H1 (cell line): ENCODE measurements at regions of chr3 and their contacts with region 1.

Region 1: GRCh38 chr3:123739754-123740153 is 144.4 kb downstream of the MYLK start:
- DNase-seq: no peak
- H3K4me3 ChIP-seq: no peak overlapping the region
- H3K27ac ChIP-seq: no peak overlapping the region
- H3K4me1 ChIP-seq: no peaks in the 10 kb centered on the region
- H3K27me3 ChIP-seq: no peaks in the 10 kb centered on the region
- CTCF ChIP-seq: no peak
- EP300 ChIP-seq: no peak
- POLR2A ChIP-seq: no peak
- RAD21 ChIP-seq: no peak

Region 2: DNA sequence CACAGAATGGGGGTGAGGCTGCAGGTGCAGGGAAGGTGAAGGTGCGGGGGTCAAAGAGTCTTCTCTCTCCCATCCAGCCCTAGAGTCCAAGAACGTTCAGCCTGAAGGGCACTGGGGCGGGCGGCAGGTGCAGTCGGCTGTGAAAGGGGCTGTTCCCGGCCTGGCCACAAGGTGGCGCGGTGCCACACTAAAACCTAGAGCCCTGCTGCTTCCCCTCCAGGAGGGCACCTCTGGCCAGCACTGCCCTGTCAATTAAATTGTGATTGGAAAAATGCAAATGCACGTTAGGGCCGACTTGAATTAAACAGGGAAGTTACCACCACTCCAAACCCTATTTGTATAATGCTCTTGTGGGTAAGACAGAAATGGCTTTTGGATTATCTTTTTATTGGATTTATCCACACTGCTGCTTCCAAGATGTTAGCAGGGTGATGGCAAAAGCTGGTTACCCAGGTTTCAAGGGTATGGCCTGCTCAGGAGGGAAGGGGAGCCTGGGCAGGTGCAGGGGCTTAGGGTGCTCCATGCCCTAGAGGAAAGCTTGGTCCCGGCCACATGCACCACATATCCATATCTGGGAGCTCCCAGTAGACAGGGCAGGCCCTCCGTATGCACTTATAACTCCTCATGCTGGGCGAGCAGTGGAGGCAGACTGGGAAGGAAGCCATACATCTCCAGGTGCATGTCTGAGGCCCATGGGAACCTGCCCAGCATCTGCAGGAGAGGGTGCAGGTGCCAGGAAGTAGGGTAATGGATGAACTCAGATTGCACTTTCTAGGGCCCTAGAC is 410.7 kb before region 1 on chr3:
- CTCF ChIA-PET with region 1: no interaction called
- POLR2A ChIA-PET with region 1: no interaction called
- DNase-seq: peak in 1 of 2 experiments; percentile 96
- H3K4me3 ChIP-seq: no peak overlapping the region
- H3K27ac ChIP-seq: no peak overlapping the region
- H3K4me1 ChIP-seq: peaks cover 0 to 5% (median 1%) of the 10 kb centered on the region in 4 experiments; a peak in 3 of 7 replicates
- H3K27me3 ChIP-seq: no peaks in the 10 kb centered on the region
- CTCF ChIP-seq: peak in 2 of 3 experiments; percentile 90 to 94; a peak in 3 of 4 replicates
- EP300 ChIP-seq: no peak
- POLR2A ChIP-seq: no peak
- RAD21 ChIP-seq: peak; percentile 86 to 88

Region 3: DNA sequence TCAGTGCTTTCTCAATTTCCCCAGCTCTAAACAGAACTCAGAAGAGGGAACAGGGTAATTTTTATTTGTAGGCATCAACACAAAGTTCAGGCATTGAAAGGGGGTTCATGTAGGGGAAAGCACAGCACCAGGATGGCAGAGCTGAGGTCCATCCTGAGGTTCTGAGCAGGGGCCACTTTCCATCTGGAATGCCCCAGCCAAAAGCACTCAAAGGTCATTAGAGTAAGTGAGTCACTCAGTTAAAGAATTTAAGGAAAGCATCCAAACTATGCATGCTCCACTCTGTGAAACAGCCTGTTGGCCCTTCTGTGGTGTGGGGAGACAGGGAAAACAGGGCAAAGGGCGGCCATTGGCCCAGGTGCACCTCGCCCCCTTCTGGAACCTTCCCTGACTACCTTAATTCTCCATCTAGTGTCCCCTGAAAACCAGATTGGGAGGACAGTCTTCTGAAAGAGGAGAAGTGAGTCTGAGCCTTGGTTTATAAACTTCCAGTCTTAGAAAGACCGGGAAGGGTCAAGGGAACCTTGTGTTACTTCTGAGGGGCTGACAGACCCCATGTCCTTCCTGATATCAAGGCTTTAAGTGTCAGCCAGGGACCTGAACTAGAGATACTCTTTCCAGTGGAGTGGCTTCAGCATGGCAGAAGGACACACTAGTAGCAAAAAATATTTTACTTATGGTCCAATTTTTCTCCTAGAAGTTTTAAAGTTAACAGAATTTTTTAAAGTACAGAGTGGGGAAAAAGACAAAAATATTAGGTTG is 11.1 kb after region 1 on chr3:
- CTCF ChIA-PET with region 1: interaction called, 10 read pairs
- POLR2A ChIA-PET with region 1: interaction called, 3 read pairs
- DNase-seq: peak in 1 of 2 experiments; percentile 45
- H3K4me3 ChIP-seq: no peak overlapping the region
- H3K27ac ChIP-seq: no peak overlapping the region
- H3K4me1 ChIP-seq: 0 out of 7 replicates have a peak, but pooled peaks cover 0 to 3% (median 0%) of the 10 kb centered on the region in 4 experiments
- H3K27me3 ChIP-seq: no peaks in the 10 kb centered on the region
- CTCF ChIP-seq: no peak
- EP300 ChIP-seq: no peak
- POLR2A ChIP-seq: no peak
- RAD21 ChIP-seq: no peak; a peak in 1 of 4 replicates